Right ventricle myocardium inferior (tissue), 1 donor: ENCODE measurements at regions of chrX and their contacts with region 1.

Region 1: DNA sequence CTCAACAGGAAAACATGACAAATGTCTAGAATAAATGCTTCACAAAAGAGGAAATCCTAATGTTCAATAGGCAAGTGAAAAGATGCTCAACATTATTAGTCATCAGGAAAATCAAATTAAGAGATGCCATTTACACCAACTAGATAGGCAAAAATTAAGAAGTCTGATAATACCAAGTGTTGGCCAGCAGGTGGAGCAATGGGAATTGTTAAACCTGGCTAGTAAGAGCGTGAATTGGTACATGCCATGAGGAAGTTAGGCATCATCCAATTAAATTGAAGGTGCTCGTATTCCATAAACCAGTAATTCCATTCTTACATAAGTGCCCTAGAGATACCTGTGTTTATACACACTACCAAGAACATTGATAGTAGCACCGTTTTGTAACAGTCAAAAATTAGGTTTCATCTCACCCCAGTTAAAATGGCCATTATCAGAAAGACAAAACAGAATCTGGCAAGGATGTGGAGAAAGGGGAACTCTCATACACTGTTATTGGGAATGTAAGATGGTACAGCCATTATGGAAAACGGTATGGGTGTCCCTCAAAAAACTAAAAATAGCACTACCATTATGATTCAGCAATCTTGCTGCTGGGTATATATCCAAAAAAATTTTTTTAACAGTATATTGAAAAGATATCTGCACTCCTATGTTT is 14.0 kb upstream of the ZCCHC18 start:
- DNase-seq: no peak
- ATAC-seq: no peak

Region 2: GRCh38 chrX:104136241-104137019 is 38.1 kb after region 1 on chrX:
- intact Hi-C with region 1: loop called (anchors 2 kb)
- DNase-seq: no peak
- ATAC-seq: peak; percentile 87